ENCODE measurements at regions of chr2 and their contacts with region 1.

Region 1: GRCh38 chr2:177044671-177045070 is 167.9 kb upstream of the HNRNPA3 start:
- DNase-seq: no peak
- H3K4me3 ChIP-seq: no peak overlapping the region
- CTCF ChIP-seq: no peak

Region 2: GRCh38 chr2:176774766-176775451 is 269.8 kb before region 1 on chr2:
- in situ Hi-C with region 1: no loop called
- DNase-seq: no peak
- H3K4me3 ChIP-seq: no peak overlapping the region
- CTCF ChIP-seq: no peak

Region 3: DNA sequence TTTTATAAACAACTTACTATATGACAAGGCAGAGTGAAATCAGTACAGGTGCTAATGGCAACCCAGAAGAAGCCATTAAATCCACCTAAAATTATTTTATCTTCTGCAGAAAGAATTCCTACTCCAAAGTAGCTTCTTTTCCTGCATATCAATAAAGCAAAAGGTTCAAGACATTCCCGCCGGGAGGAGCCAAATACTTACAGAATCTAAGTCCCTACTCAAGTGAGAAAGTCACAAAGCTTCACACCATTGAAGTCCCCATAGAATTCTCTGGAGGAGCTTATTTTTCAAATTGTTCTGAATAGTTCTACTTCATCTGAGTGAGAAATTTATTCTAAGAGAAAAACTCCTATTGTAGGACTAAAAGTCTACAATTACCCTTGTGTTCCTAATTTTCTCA is 65.8 kb before region 1 on chr2:
- in situ Hi-C with region 1: loop called (anchors 5 kb)
- DNase-seq: no peak
- H3K4me3 ChIP-seq: no peak overlapping the region
- CTCF ChIP-seq: no peak

Region 4: GRCh38 chr2:177114712-177115111 is 70.0 kb after region 1 on chr2:
- in situ Hi-C with region 1: loop called (anchors 5 kb)
- DNase-seq: no peak
- H3K4me3 ChIP-seq: no peak overlapping the region
- CTCF ChIP-seq: no peak

Region 5: GRCh38 chr2:177129610-177130009 is 84.9 kb after region 1 on chr2:
- in situ Hi-C with region 1: no loop called
- DNase-seq: no peak
- H3K4me3 ChIP-seq: no peak overlapping the region
- CTCF ChIP-seq: no peak

Region 6: DNA sequence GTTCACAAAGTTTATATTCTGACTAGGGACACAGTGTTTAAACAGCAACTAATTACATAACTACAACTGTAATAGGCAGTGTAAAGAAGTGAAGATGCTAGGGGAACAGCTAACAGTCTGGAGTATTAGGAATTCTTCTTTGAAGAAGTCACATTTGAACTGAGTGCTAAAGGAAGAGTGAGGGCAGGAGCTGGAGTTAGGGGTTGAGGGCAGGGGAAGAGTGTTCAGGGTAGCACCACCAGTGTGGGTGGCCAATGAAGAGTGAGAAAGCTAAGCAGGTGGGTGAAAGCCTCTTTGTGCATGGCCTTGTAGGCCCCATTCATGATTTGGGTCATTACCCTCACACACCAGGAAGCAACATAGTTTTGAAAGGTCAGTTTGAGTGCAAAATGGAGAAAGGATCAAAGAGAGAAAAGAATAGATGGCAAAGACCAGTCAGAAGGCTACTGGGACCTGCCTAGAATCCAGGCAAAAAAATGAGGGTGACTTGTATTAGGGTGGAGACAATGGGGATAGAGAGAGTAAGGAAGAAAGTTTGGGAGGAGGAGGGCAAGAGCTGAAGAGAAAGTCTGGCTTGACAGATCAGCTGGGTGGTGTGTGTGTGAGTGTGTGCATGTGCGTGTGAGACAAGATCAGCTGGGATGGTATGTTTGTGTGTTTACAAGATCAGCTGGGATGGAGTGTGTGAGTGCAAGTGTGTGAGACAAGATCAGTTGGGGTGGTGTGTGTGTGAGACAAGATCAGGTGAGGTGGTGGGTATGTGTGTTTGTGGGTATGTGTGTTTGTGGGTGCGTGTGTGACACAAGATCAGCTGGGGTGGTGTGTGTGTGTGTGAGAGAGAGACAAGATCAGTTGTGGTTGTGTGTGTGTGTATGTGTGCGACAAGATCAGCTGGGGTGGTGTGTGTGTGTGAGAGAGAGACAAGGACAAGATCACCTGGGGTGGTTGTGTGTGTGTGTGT is 304.3 kb after region 1 on chr2:
- in situ Hi-C with region 1: no loop called
- DNase-seq: no peak
- H3K4me3 ChIP-seq: no peak overlapping the region
- CTCF ChIP-seq: no peak